Activated T-helper 1 cell treated with anti-CD3 and anti-CD28 coated beads, Interleukin-12 subunit alpha, Interleukin-12 subunit beta, Interleukin-2, Interleukin-4 antibody, amounts not matched to agents 30 ng/mL and 10 ng/mL and 1 ng/mL, durations not matched to agents 14 hours and 24 hours and 36 hours (primary cell): ENCODE measurements at regions of chr5 and their contacts with region 1.

Region 1: GRCh38 chr5:111254613-111255012 is 30.4 kb downstream of the CAMK4 start:
- DNase-seq: peak; percentile 75
- H3K4me3 Mint-ChIP-seq: peak overlapping the region; percentile 16
- H3K27ac Mint-ChIP-seq: peak overlapping the region; percentile 74
- H3K4me1 Mint-ChIP-seq: peaks cover 75% of the 10 kb centered on the region
- H3K27me3 Mint-ChIP-seq: no peaks in the 10 kb centered on the region

Region 2: GRCh38 chr5:110414360-110414759 is 840.3 kb before region 1 on chr5:
- intact Hi-C with region 1: no loop called
- DNase-seq: no peak
- H3K4me3 Mint-ChIP-seq: no peak overlapping the region
- H3K27ac Mint-ChIP-seq: no peak overlapping the region
- H3K4me1 Mint-ChIP-seq: no peaks in the 10 kb centered on the region
- H3K27me3 Mint-ChIP-seq: peaks cover 2% of the 10 kb centered on the region

Region 3: GRCh38 chr5:110807169-110807568 is 447.4 kb before region 1 on chr5:
- intact Hi-C with region 1: no loop called
- DNase-seq: no peak
- H3K4me3 Mint-ChIP-seq: no peak overlapping the region
- H3K27ac Mint-ChIP-seq: no peak overlapping the region
- H3K4me1 Mint-ChIP-seq: no peaks in the 10 kb centered on the region
- H3K27me3 Mint-ChIP-seq: no peaks in the 10 kb centered on the region

Region 4: GRCh38 chr5:111223889-111224563 is 30.6 kb before region 1 on chr5 and contains the start of gene CAMK4:
- intact Hi-C with region 1: loop called (anchors 1 kb)
- DNase-seq: peak; percentile 70
- H3K4me3 Mint-ChIP-seq: peak within 1 kb of the TSS; percentile 98
- H3K27ac Mint-ChIP-seq: peak within 1 kb of the TSS; percentile 95
- H3K4me1 Mint-ChIP-seq: peaks cover 54% of the 10 kb centered on the region
- H3K27me3 Mint-ChIP-seq: peaks cover 2% of the 10 kb centered on the region
- total RNA-seq, gene CAMK4: 51.8 and 56.9 TPM in 2 replicates

Region 5: DNA sequence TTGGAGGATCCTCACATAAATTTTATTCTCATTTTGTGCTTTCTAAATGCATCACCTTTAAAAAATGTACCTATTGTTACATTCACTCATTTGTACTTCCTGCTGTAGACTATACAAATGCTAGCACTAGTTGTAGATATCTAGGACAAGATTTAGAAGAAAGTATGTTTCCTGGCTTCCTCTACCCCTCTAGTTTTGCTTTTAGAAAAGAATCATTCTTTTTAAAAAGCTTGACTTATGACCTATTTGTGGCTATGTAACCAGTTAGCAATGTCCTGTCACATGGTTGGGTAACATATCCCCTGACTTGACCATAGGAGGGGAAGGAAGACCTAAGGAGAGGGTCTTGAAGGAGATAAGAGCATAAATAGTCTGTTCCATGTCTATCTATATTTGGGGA is 17.1 kb before region 1 on chr5:
- intact Hi-C with region 1: loop called (anchors 1 kb)
- DNase-seq: no peak
- H3K4me3 Mint-ChIP-seq: peak overlapping the region; percentile 70
- H3K27ac Mint-ChIP-seq: peak overlapping the region; percentile 91
- H3K4me1 Mint-ChIP-seq: peaks cover 85% of the 10 kb centered on the region
- H3K27me3 Mint-ChIP-seq: no peaks in the 10 kb centered on the region

Region 6: GRCh38 chr5:111278845-111279504 is 24.4 kb after region 1 on chr5:
- intact Hi-C with region 1: loop called (anchors 1 kb)
- DNase-seq: peak; percentile 75
- H3K4me3 Mint-ChIP-seq: no peak overlapping the region
- H3K27ac Mint-ChIP-seq: no peak overlapping the region
- H3K4me1 Mint-ChIP-seq: peaks cover 27% of the 10 kb centered on the region
- H3K27me3 Mint-ChIP-seq: no peaks in the 10 kb centered on the region

Region 7: GRCh38 chr5:112968411-112969106 is 1713.9 kb after region 1 on chr5:
- intact Hi-C with region 1: loop called (anchors 10 kb)
- DNase-seq: no peak
- H3K4me3 Mint-ChIP-seq: no peak overlapping the region
- H3K27ac Mint-ChIP-seq: no peak overlapping the region
- H3K4me1 Mint-ChIP-seq: peaks cover 33% of the 10 kb centered on the region
- H3K27me3 Mint-ChIP-seq: no peaks in the 10 kb centered on the region